Right ventricle myocardium inferior (tissue), 1 donor: ENCODE measurements at regions of chr21 and their contacts with region 1.

Region 1: GRCh38 chr21:38805328-38806152 is at the start of gene ETS2:
- DNase-seq: peak; percentile 96
- ATAC-seq: peak; percentile 93
- total RNA-seq, gene ETS2: 51.5 TPM

Region 2: DNA sequence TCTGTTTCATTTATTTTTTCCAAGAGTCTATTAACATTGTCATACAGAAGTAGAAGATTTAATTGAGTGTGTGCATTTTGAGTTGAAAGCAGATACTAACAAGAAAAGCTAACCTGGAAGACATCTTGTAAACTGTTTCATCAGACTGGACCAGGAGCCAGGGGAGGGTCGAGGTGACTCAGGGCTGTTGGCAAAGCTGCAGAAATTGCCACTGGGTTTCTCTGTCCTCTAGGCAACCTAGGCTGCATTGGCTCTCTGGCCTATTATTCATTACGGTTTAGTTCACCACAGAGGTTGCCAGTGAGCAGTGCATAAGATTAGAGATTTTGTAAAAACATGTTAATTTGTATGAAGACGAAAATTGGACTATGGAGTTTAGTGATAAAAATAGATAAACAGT is 334.8 kb before region 1 on chr21:
- intact Hi-C with region 1: no loop called
- DNase-seq: no peak
- ATAC-seq: no peak

Region 3: DNA sequence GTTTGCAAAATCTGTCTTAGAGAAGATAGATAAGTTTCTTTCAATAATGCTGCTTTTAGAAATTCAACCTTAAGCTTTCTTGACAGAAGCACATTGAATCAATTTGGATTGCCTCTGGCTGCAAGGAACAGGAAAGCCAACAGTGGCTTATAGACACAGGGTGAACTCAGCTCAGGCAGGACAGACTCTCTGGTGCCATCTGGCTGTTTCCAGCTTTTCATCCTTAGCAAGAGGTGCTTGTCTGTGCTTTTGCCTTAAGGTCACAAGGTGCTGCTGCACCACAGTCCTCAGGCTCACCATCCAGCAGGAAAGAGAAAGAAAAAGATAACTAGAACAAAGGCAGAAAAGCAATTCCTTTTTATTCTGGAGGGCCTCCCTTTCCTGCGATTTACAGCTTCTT is 93.5 kb before region 1 on chr21:
- intact Hi-C with region 1: no loop called
- DNase-seq: no peak
- ATAC-seq: no peak

Region 4: DNA sequence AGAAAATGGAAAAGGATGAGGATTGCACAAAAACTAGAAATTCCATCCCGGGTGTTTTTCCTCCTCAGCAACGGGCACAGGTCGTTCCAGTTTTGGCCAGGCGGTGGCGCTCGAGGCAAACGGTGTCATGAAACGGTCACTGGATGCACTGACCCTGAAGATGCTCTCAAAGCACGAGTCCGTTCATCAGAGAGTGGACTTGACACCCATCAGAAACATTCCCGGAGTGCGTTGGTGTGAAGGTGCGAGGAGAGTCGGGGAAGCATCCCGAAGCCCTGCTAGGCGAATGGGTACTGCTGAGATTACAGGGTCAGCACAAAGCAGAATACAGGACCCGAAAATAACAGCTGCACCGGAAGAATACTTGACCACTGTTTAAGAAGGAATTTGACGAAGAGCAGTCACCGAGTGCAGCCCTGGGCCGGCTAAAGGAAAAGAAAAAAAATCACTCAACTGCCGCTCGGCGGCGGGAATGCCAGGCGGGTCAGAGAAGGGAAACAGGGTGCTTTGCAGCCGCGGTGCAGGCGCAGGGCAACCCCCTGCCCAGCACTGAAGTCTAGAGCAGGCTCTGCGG is 71.5 kb before region 1 on chr21:
- intact Hi-C with region 1: loop called (anchors 2 kb)
- DNase-seq: peak; percentile 94
- ATAC-seq: peak; percentile 93

Region 5: GRCh38 chr21:39004634-39005501 is 199.3 kb after region 1 on chr21:
- intact Hi-C with region 1: loop called (anchors 5 kb)
- DNase-seq: peak; percentile 83
- ATAC-seq: peak; percentile 79

Region 6: DNA sequence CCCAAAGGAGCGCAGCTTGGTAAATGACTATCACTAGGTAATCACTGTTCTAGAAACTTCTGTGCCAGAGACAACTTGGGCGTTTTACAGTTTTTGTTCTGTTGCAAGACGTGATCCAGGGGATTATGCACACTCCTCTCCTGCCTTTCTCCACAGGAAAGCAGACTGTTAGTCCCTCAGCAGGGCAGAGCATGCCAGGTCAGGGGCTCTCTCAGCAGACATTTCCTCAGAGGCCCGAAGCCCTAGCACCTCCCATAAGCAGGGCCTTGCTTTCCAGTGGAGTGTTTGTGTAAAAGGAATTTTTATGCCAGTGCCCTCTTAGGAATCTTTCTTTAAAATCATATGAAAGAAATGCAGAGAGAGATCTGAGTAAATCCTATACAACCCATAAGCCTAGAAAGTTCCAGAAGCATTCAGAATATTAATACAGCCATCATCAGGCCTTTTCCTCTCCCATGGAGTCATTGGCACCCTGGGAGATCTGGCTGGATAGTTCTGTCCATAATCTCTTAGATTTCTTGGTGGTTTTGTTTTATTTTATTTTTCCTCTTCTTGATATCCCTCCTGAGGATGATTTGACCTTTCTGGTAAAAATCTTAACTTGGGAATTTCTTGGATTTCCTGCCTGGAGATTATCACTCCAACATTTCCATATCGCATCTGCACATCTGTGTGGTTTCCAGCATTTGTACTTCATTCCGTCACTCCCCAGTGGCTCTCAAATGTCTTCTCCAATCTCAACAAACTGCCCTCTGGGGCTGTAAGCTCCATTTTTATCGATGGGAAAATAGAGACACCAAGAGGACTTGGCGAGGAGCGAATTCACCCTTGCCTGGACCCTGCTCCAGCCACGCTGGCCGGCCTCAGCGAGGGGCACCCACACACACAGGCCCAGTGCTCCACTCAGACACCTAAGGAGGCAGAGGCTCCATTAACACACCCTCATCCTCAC is 261.6 kb after region 1 on chr21:
- intact Hi-C with region 1: loop called (anchors 5 kb)
- DNase-seq: no peak
- ATAC-seq: peak; percentile 57

Region 7: GRCh38 chr21:39125752-39126485 is 320.4 kb after region 1 on chr21:
- intact Hi-C with region 1: loop called (anchors 2 kb)
- DNase-seq: peak; percentile 60
- ATAC-seq: peak; percentile 94